HepG2 (cell line): ENCODE measurements at regions of chr17 and their contacts with region 1.

Region 1: GRCh38 chr17:39517224-39517623 is 55.9 kb downstream of the CDK12 start:
- DNase-seq: no peak
- ATAC-seq: no peak
- H3K4me3 ChIP-seq: no peak overlapping the region
- H3K27ac ChIP-seq: no peak overlapping the region
- H3K4me1 ChIP-seq: no peaks in the 10 kb centered on the region
- H3K27me3 ChIP-seq: no peaks in the 10 kb centered on the region
- CTCF ChIP-seq: no peak
- EP300 ChIP-seq: no peak
- POLR2A ChIP-seq: no peak
- RAD21 ChIP-seq: no peak

Region 2: GRCh38 chr17:39485555-39485954 is 31.7 kb before region 1 on chr17:
- CTCF ChIA-PET with region 1: no interaction called
- POLR2A ChIA-PET with region 1: no interaction called
- in situ Hi-C with region 1: no loop called
- intact Hi-C with region 1: loop called (anchors 1 kb)
- DNase-seq: no peak
- ATAC-seq: no peak
- H3K4me3 ChIP-seq: no peak overlapping the region
- H3K27ac ChIP-seq: no peak overlapping the region
- H3K4me1 ChIP-seq: no peaks in the 10 kb centered on the region
- H3K27me3 ChIP-seq: no peaks in the 10 kb centered on the region
- CTCF ChIP-seq: no peak
- EP300 ChIP-seq: no peak
- POLR2A ChIP-seq: no peak
- RAD21 ChIP-seq: no peak

Region 3: GRCh38 chr17:39722965-39723848 is 206.0 kb after region 1 on chr17:
- CTCF ChIA-PET with region 1: no interaction called
- POLR2A ChIA-PET with region 1: no interaction called
- in situ Hi-C with region 1: no loop called
- intact Hi-C with region 1: no loop called
- DNase-seq: no peak
- ATAC-seq: no peak
- H3K4me3 ChIP-seq: no peak overlapping the region
- H3K27ac ChIP-seq: no peak overlapping the region
- H3K4me1 ChIP-seq: no peaks in the 10 kb centered on the region
- H3K27me3 ChIP-seq: no peaks in the 10 kb centered on the region
- CTCF ChIP-seq: no peak
- EP300 ChIP-seq: no peak
- POLR2A ChIP-seq: no peak
- RAD21 ChIP-seq: no peak